ENCODE measurements at regions of chr5 and their contacts with region 1.

Region 1: GRCh38 chr5:149141224-149141956 is at the start of gene ABLIM3:
- DNase-seq: peak in 1 of 2 donors; percentile 57
- ATAC-seq: peak; percentile 95
- total RNA-seq, gene ABLIM3: 3.4 to 4.3 TPM

Region 2: GRCh38 chr5:149035372-149035790 is 106.0 kb before region 1 on chr5:
- intact Hi-C with region 1: no loop called
- DNase-seq: peak; percentile 46 to 73
- ATAC-seq: peak; percentile 81

Region 3: GRCh38 chr5:149228618-149229297 is 87.4 kb after region 1 on chr5:
- intact Hi-C with region 1: loop called (anchors 10 kb)
- DNase-seq: no peak
- ATAC-seq: peak; percentile 93

Region 4: DNA sequence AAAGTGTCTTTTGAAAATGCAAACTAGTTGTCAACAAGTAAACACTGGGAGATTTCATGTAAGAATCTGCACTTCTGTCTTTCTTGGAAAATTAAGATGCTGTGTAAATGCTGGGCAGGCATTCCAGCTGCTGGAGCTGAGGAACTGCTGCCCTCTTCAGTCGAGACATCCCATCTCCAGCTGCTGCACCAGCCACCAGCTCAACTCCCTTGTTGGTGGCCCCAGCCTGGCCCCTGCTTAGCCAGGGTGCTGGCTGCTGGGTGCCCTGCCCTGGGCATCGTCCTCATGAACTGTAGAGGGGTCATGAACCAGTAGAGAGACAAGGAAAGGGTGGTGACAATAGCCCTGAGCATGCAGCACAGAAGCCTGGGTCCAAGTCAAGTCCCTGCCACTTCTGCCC is 97.2 kb after region 1 on chr5:
- intact Hi-C with region 1: loop called in 1 of 2 experiments (anchors 10 kb)
- DNase-seq: no peak
- ATAC-seq: no peak